WTC11 (cell line): ENCODE measurements at regions of chr2 and their contacts with region 1.

Region 1: GRCh38 chr2:102141970-102142828 is at the start of gene IL1R1:
- DNase-seq: peak; percentile 62
- ATAC-seq: peak; percentile 86
- H3K4me3 Mint-ChIP-seq: peak within 1 kb of the TSS; percentile 74
- H3K27ac Mint-ChIP-seq: no peak within 1 kb of the TSS
- H3K4me1 Mint-ChIP-seq: peaks cover 17% of the 10 kb centered on the region
- H3K27me3 Mint-ChIP-seq: peaks cover 41% of the 10 kb centered on the region
- CTCF ChIP-seq: no peak
- total RNA-seq, gene IL1R1: 0.37 to 0.78 TPM (median 0.55 TPM) in 3 replicates

Region 2: GRCh38 chr2:102107741-102108070 is 34.5 kb before region 1 on chr2:
- CTCF ChIA-PET with region 1: no interaction called
- POLR2A ChIA-PET with region 1: no interaction called
- DNase-seq: no peak
- ATAC-seq: no peak
- H3K4me3 Mint-ChIP-seq: no peak overlapping the region
- H3K27ac Mint-ChIP-seq: no peak overlapping the region
- H3K4me1 Mint-ChIP-seq: peaks cover 13% of the 10 kb centered on the region
- H3K27me3 Mint-ChIP-seq: no peaks in the 10 kb centered on the region; the same call in 1 of the 2 replicates
- CTCF ChIP-seq: no peak

Region 3: DNA sequence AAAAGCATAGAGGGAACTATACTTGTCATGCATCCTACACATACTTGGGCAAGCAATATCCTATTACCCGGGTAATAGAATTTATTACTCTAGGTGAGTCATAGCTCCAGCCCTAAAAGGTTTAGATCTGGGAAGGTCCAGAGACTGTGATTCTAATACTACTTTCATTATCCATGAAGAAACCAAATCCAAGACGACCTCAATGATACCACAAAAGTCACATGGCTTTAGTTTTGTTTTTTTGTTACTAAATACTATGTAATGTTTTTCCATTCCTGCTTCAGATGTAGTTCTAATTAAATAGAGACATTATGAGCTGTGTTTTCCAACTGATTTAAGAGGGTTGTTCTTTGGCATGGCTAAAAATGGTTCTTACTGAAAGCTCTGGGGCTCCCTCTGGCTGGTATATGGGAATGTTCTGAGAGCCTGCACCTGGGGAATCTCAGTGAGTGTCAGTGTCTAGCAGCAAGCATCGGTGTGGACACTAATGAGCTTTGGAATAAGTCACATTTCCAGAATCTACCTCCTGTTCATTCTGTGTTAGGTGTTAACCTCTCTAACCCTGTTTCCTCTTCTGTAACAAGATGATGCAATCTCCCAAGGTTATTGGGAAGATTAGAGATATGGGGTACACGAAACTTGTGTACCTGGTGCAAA is 24.1 kb after region 1 on chr2:
- CTCF ChIA-PET with region 1: interaction called, 13 read pairs
- POLR2A ChIA-PET with region 1: no interaction called
- DNase-seq: no peak
- ATAC-seq: peak; percentile 85
- H3K4me3 Mint-ChIP-seq: no peak overlapping the region
- H3K27ac Mint-ChIP-seq: no peak overlapping the region
- H3K4me1 Mint-ChIP-seq: peaks cover 1% of the 10 kb centered on the region
- H3K27me3 Mint-ChIP-seq: no peaks in the 10 kb centered on the region
- CTCF ChIP-seq: no peak